ENCODE measurements at regions of chr18 and their contacts with region 1.

Region 1: GRCh38 chr18:2680216-2680792 is 24.8 kb downstream of the SMCHD1 start:
- DNase-seq: no peak
- ATAC-seq: no peak
- H3K4me3 ChIP-seq: no peak overlapping the region
- H3K4me3 Mint-ChIP-seq: no peak overlapping the region
- H3K27ac ChIP-seq: peak overlapping the region in 1 of 2 experiments; percentile 27
- H3K27ac Mint-ChIP-seq: no peak overlapping the region
- H3K4me1 ChIP-seq: peaks cover 32% of the 10 kb centered on the region
- H3K4me1 Mint-ChIP-seq: peaks cover 62% of the 10 kb centered on the region
- H3K27me3 ChIP-seq: no peaks in the 10 kb centered on the region
- H3K27me3 Mint-ChIP-seq: no peaks in the 10 kb centered on the region
- CTCF ChIP-seq: no peak

Region 2: GRCh38 chr18:2644535-2644934 is 35.8 kb before region 1 on chr18:
- CTCF ChIA-PET with region 1: no interaction called
- POLR2A ChIA-PET with region 1: no interaction called
- intact Hi-C with region 1: no loop called
- DNase-seq: peak in 1 of 9 experiments; percentile 35
- ATAC-seq: no peak
- H3K4me3 ChIP-seq: no peak overlapping the region
- H3K4me3 Mint-ChIP-seq: no peak overlapping the region
- H3K27ac ChIP-seq: peak overlapping the region in 1 of 2 experiments; percentile 38
- H3K27ac Mint-ChIP-seq: no peak overlapping the region
- H3K4me1 ChIP-seq: peaks cover 49% of the 10 kb centered on the region
- H3K4me1 Mint-ChIP-seq: peaks cover 22% of the 10 kb centered on the region
- H3K27me3 ChIP-seq: no peaks in the 10 kb centered on the region
- H3K27me3 Mint-ChIP-seq: no peaks in the 10 kb centered on the region
- CTCF ChIP-seq: no peak

Region 3: DNA sequence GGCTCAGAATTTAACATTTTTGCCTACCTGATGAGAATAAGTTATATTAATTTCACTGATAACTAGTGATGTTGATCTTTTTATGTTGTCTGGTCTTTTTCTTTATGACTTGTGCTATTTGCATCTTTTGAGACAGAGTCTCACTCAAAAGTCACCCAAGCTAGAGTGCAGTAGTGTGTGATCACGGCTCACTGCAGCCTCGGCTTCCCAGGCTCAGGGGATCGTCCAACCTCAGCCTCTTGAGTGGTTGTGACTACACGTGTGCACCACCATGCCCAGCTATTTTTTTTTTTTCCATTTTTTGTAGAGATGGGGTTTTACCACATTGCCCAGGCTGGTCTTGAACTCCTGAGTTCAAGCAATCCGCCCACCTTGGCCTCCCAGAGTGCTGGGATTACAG is 17.3 kb before region 1 on chr18:
- CTCF ChIA-PET with region 1: no interaction called
- POLR2A ChIA-PET with region 1: interaction called, 3 read pairs
- intact Hi-C with region 1: loop called (anchors 2 kb)
- DNase-seq: no peak
- ATAC-seq: peak; percentile 30
- H3K4me3 ChIP-seq: no peak overlapping the region
- H3K4me3 Mint-ChIP-seq: peak overlapping the region; percentile 62
- H3K27ac ChIP-seq: peak overlapping the region in 1 of 2 experiments; percentile 30
- H3K27ac Mint-ChIP-seq: peak overlapping the region; percentile 49
- H3K4me1 ChIP-seq: peaks cover 50% of the 10 kb centered on the region
- H3K4me1 Mint-ChIP-seq: peaks cover 74% of the 10 kb centered on the region
- H3K27me3 ChIP-seq: no peaks in the 10 kb centered on the region
- H3K27me3 Mint-ChIP-seq: no peaks in the 10 kb centered on the region
- CTCF ChIP-seq: no peak

Region 4: GRCh38 chr18:2692508-2692907 is 12.2 kb after region 1 on chr18:
- CTCF ChIA-PET with region 1: interaction called, 3 read pairs
- POLR2A ChIA-PET with region 1: interaction called, 3 read pairs
- intact Hi-C with region 1: loop called in 1 of 2 experiments (anchors 2 kb)
- DNase-seq: no peak
- ATAC-seq: no peak
- H3K4me3 ChIP-seq: no peak overlapping the region
- H3K4me3 Mint-ChIP-seq: no peak overlapping the region
- H3K27ac ChIP-seq: no peak overlapping the region
- H3K27ac Mint-ChIP-seq: peak overlapping the region; percentile 20
- H3K4me1 ChIP-seq: peaks cover 14% of the 10 kb centered on the region
- H3K4me1 Mint-ChIP-seq: peaks cover 46% of the 10 kb centered on the region
- H3K27me3 ChIP-seq: no peaks in the 10 kb centered on the region
- H3K27me3 Mint-ChIP-seq: no peaks in the 10 kb centered on the region
- CTCF ChIP-seq: no peak